ENCODE measurements at regions of chr12 and their contacts with region 1.

Region 1: GRCh38 chr12:102281231-102281630 is 83.6 kb upstream of the PMCH start:
- DNase-seq: no peak
- ATAC-seq: no peak
- H3K4me3 ChIP-seq: no peak overlapping the region
- H3K27ac ChIP-seq: no peak overlapping the region
- H3K4me1 ChIP-seq: no peaks in the 10 kb centered on the region
- H3K27me3 ChIP-seq: no peaks in the 10 kb centered on the region
- CTCF ChIP-seq: no peak
- POLR2A ChIP-seq: no peak
- RAD21 ChIP-seq: no peak

Region 2: DNA sequence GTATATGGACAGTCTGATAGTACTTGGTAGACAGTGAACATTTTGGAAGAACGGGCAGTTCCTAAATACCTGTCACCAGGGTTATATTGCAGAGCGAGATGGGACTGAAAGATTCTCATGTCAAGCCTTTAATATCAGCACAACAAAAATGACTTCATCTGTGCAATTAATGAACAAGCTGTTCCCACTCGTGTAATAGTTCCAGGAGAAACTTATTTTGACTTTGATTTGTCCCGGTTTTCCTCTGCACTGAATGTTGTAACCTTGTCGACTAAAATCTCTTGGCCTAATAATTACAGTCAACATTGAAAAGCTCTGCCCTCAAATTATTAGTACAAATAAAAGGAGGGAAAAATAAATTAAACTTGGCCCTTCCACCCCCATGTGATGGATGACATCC is 298.9 kb before region 1 on chr12:
- CTCF ChIA-PET with region 1: no interaction called
- POLR2A ChIA-PET with region 1: no interaction called
- RAD21 ChIA-PET with region 1: no interaction called
- intact Hi-C with region 1: loop called (anchors 10 kb)
- DNase-seq: no peak
- ATAC-seq: no peak
- H3K4me3 ChIP-seq: no peak overlapping the region
- H3K27ac ChIP-seq: no peak overlapping the region
- H3K4me1 ChIP-seq: no peaks in the 10 kb centered on the region
- H3K27me3 ChIP-seq: no peaks in the 10 kb centered on the region
- CTCF ChIP-seq: no peak
- POLR2A ChIP-seq: no peak
- RAD21 ChIP-seq: no peak

Region 3: GRCh38 chr12:102167821-102168604 is 113.2 kb before region 1 on chr12:
- CTCF ChIA-PET with region 1: no interaction called
- POLR2A ChIA-PET with region 1: no interaction called
- RAD21 ChIA-PET with region 1: no interaction called
- intact Hi-C with region 1: no loop called
- DNase-seq: no peak
- ATAC-seq: no peak
- H3K4me3 ChIP-seq: no peak overlapping the region
- H3K27ac ChIP-seq: no peak overlapping the region
- H3K4me1 ChIP-seq: no peaks in the 10 kb centered on the region
- H3K27me3 ChIP-seq: no peaks in the 10 kb centered on the region
- CTCF ChIP-seq: no peak
- POLR2A ChIP-seq: no peak
- RAD21 ChIP-seq: no peak

Region 4: GRCh38 chr12:102249077-102249841 is 32.0 kb before region 1 on chr12:
- CTCF ChIA-PET with region 1: no interaction called
- POLR2A ChIA-PET with region 1: no interaction called
- RAD21 ChIA-PET with region 1: no interaction called
- intact Hi-C with region 1: no loop called
- DNase-seq: no peak
- ATAC-seq: no peak
- H3K4me3 ChIP-seq: no peak overlapping the region
- H3K27ac ChIP-seq: no peak overlapping the region
- H3K4me1 ChIP-seq: no peaks in the 10 kb centered on the region
- H3K27me3 ChIP-seq: no peaks in the 10 kb centered on the region
- CTCF ChIP-seq: no peak
- POLR2A ChIP-seq: no peak
- RAD21 ChIP-seq: no peak